ENCODE measurements at regions of chr12 and their contacts with region 1.

Region 1: GRCh38 chr12:110280779-110281548 is at the start of gene ATP2A2:
- DNase-seq: peak; percentile 85 to 92 (median 89)
- H3K4me3 ChIP-seq: peak within 1 kb of the TSS; percentile 63 to 96 (median 89)
- H3K4me3 Mint-ChIP-seq: peak within 1 kb of the TSS; percentile 94 to 96
- H3K27ac ChIP-seq: peak within 1 kb of the TSS; percentile 90 to 94
- H3K27ac Mint-ChIP-seq: peak within 1 kb of the TSS; percentile 86 to 94 (median 92)
- H3K4me1 ChIP-seq: peaks cover 42 to 52% of the 10 kb centered on the region in 2 donors
- H3K4me1 Mint-ChIP-seq: peaks cover 47% of the 10 kb centered on the region
- H3K27me3 ChIP-seq: no peaks in the 10 kb centered on the region
- H3K27me3 Mint-ChIP-seq: peaks cover 0 to 7% (median 5%) of the 10 kb centered on the region in 3 donors
- CTCF ChIP-seq: no peak
- polyA plus RNA-seq, gene ATP2A2: 4.5 to 83.1 (median 6.9) TPM

Region 2: DNA sequence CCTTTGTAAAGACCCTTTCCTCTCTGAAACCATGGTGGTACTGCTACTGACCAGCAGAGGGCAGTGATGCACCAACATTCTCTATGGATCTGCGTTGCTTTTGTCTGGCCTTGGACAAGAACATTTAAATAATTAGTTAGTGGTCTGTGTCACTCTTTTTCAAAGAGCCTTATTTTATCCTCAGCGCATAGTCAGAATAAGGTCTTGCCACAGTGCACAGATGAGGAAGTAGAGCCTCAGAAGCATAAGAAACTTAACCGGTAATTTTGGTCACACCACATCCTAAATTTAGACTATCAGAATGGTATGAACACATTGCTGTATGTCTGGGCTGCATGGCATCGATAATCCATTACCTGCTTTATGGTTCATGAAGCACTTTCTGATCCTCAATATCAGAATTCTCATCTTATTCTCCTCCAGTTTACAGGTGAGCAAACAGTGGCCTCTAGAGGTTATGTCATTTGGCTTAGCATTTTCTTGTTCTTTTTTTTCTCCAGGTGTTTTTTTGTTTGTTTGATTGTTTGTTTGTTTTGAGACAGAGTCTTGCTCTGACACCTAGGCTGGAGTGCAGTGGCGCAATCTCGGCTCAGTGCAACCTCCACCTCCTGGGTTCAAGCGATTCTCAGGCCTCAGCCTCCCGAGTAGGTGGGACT is 180.5 kb before region 1 on chr12:
- intact Hi-C with region 1: no loop called
- DNase-seq: peak; percentile 65 to 80 (median 80)
- H3K4me3 ChIP-seq: no peak overlapping the region
- H3K4me3 Mint-ChIP-seq: no peak overlapping the region
- H3K27ac ChIP-seq: no peak overlapping the region
- H3K27ac Mint-ChIP-seq: peak overlapping the region in 5 of 7 donors; percentile 10 to 73 (median 60)
- H3K4me1 ChIP-seq: peaks cover 32 to 33% of the 10 kb centered on the region in 2 donors
- H3K4me1 Mint-ChIP-seq: peaks cover 29% of the 10 kb centered on the region
- H3K27me3 ChIP-seq: no peaks in the 10 kb centered on the region
- H3K27me3 Mint-ChIP-seq: no peaks in the 10 kb centered on the region
- CTCF ChIP-seq: peak; percentile 90

Region 3: GRCh38 chr12:110234755-110235154 is 46.2 kb before region 1 on chr12:
- intact Hi-C with region 1: loop called in 1 of 2 experiments (anchors 10 kb)
- DNase-seq: peak; percentile 53 to 72 (median 63)
- H3K4me3 ChIP-seq: peak overlapping the region; percentile 28 to 64 (median 64)
- H3K4me3 Mint-ChIP-seq: peak overlapping the region in 1 of 2 donors; percentile 50
- H3K27ac ChIP-seq: peak overlapping the region in 1 of 2 donors; percentile 82
- H3K27ac Mint-ChIP-seq: peak overlapping the region; percentile 89 to 93 (median 90)
- H3K4me1 ChIP-seq: peaks cover 31 to 44% of the 10 kb centered on the region in 2 donors
- H3K4me1 Mint-ChIP-seq: peaks cover 34% of the 10 kb centered on the region
- H3K27me3 ChIP-seq: no peaks in the 10 kb centered on the region
- H3K27me3 Mint-ChIP-seq: peaks cover 0 to 2% (median 0%) of the 10 kb centered on the region in 3 donors
- CTCF ChIP-seq: no peak

Region 4: GRCh38 chr12:110253176-110253575 is 27.8 kb before region 1 on chr12:
- intact Hi-C with region 1: loop called in 1 of 2 experiments (anchors 1 kb)
- DNase-seq: peak; percentile 63 to 74 (median 66)
- H3K4me3 ChIP-seq: peak overlapping the region in 1 of 3 experiments; percentile 54
- H3K4me3 Mint-ChIP-seq: peak overlapping the region; percentile 65 to 77
- H3K27ac ChIP-seq: peak overlapping the region; percentile 49 to 70
- H3K27ac Mint-ChIP-seq: peak overlapping the region; percentile 84 to 95 (median 91)
- H3K4me1 ChIP-seq: peaks cover 65 to 72% of the 10 kb centered on the region in 2 donors
- H3K4me1 Mint-ChIP-seq: peaks cover 72% of the 10 kb centered on the region
- H3K27me3 ChIP-seq: no peaks in the 10 kb centered on the region
- H3K27me3 Mint-ChIP-seq: peaks cover 2 to 3% (median 2%) of the 10 kb centered on the region in 3 donors
- CTCF ChIP-seq: no peak

Measured in CD14-positive monocyte (primary cell).